ENCODE measurements at regions of chr13 and their contacts with region 1.

Region 1: DNA sequence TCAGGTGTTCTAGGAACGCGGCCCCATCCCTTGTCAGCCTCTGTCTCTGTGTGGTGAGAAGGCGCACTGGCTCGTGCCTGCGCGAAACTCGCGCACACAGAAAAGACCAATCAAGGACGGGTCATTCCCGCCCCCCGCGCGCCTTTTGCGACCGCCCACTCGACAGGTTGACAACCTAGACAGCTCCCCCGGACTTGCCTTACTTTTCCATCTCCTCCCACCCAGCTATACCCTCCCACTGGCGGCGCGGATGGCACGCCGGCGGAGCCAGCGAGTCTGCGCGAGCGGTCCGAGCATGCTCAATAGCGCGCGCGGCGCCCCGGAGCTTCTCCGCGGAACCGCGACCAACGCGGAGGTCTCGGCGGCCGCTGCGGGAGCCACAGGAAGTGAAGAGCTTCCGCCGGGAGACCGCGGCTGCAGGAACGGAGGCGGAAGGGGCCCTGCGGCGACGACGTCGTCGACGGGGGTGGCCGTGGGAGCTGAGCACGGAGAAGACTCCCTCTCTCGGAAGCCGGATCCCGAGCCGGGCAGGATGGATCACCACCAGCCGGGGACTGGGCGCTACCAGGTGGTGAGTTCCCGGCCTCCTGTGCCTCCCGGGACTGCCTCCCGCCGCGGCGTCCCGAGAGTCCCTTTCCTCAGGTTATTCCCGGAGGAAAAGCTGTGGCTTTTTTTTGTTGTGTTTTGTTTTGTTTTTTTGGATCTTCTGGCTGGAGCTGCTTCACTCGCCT is at the start of gene NDFIP2:
- DNase-seq: peak; percentile 87
- ATAC-seq: peak; percentile 85
- H3K4me3 ChIP-seq: peak within 1 kb of the TSS; percentile 98
- H3K27ac ChIP-seq: peak within 1 kb of the TSS; percentile 66
- H3K4me1 ChIP-seq: peaks cover 34% of the 10 kb centered on the region
- H3K27me3 ChIP-seq: no peaks in the 10 kb centered on the region
- CTCF ChIP-seq: no peak
- total RNA-seq, gene NDFIP2: 17.9 and 19.5 TPM in 2 replicates

Region 2: GRCh38 chr13:79423801-79424642 is 57.1 kb before region 1 on chr13:
- CTCF ChIA-PET with region 1: interaction called, 13 read pairs
- POLR2A ChIA-PET with region 1: interaction called, 15 read pairs
- intact Hi-C with region 1: no loop called
- DNase-seq: peak; percentile 58
- ATAC-seq: peak; percentile 42
- H3K4me3 ChIP-seq: no peak overlapping the region
- H3K27ac ChIP-seq: no peak overlapping the region
- H3K4me1 ChIP-seq: peaks cover 8% of the 10 kb centered on the region; the same call in 1 of the 2 replicates
- H3K27me3 ChIP-seq: no peaks in the 10 kb centered on the region
- CTCF ChIP-seq: peak; percentile 62

Region 3: DNA sequence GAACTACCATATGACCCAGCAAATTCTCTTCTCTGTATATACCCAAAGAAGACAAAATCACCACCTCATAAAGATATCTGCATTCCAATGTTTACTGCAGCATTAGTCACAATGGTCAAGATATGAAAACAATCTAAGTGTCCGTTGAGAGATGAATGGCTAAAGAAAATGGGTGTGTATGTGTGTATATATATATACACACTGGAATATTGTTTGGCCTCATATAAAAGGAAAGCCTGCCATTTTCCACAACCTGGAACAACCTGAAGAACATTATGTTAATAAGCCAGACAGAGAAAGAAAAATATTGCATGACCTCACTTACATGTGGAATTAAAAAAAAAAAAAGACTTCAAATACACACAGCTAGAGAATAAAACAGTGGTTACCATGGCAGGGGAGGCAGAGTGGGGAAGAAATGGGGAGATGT is 45.5 kb before region 1 on chr13:
- CTCF ChIA-PET with region 1: no interaction called
- POLR2A ChIA-PET with region 1: interaction called, 4 read pairs
- intact Hi-C with region 1: loop called (anchors 1 kb)
- DNase-seq: peak; percentile 74
- ATAC-seq: peak; percentile 98
- H3K4me3 ChIP-seq: no peak overlapping the region
- H3K27ac ChIP-seq: no peak overlapping the region; the same call in 1 of the 2 replicates
- H3K4me1 ChIP-seq: peaks cover 11% of the 10 kb centered on the region
- H3K27me3 ChIP-seq: no peaks in the 10 kb centered on the region
- CTCF ChIP-seq: no peak

Region 4: DNA sequence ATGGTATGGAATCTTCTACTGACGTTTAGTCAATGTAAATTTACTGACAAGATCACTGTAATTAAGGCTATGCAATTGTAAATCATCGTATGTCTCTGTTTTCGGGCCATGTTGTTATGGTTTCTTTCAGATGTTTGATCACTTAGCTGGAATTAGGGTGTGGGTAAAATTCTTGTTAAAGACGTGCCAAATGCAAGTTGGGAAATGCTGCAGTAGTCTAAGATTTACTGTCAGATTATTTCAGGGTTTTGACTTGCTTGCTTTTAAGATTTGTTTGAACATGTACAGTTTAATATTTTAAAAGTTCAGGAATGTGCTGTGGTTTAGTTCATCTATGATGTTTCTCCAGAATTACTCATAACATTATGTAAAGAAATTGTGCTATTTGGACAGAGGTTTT is 10.6 kb after region 1 on chr13:
- CTCF ChIA-PET with region 1: no interaction called
- POLR2A ChIA-PET with region 1: interaction called, 5 read pairs
- intact Hi-C with region 1: loop called (anchors 1 kb)
- DNase-seq: peak; percentile 62
- ATAC-seq: peak; percentile 89
- H3K4me3 ChIP-seq: no peak overlapping the region; the same call in 1 of the 2 replicates
- H3K27ac ChIP-seq: peak overlapping the region; percentile 40
- H3K4me1 ChIP-seq: peaks cover 23% of the 10 kb centered on the region
- H3K27me3 ChIP-seq: no peaks in the 10 kb centered on the region
- CTCF ChIP-seq: no peak

Region 5: GRCh38 chr13:79525064-79525857 is 44.1 kb after region 1 on chr13:
- CTCF ChIA-PET with region 1: no interaction called
- POLR2A ChIA-PET with region 1: no interaction called
- intact Hi-C with region 1: loop called (anchors 2 kb)
- DNase-seq: peak; percentile 69
- ATAC-seq: peak; percentile 87
- H3K4me3 ChIP-seq: no peak overlapping the region
- H3K27ac ChIP-seq: peak overlapping the region; percentile 37
- H3K4me1 ChIP-seq: peaks cover 20% of the 10 kb centered on the region
- H3K27me3 ChIP-seq: no peaks in the 10 kb centered on the region
- CTCF ChIP-seq: no peak

Region 6: GRCh38 chr13:79541426-79542049 is 60.4 kb after region 1 on chr13:
- CTCF ChIA-PET with region 1: no interaction called
- POLR2A ChIA-PET with region 1: interaction called, 7 read pairs
- intact Hi-C with region 1: loop called (anchors 1 kb)
- DNase-seq: peak; percentile 82
- ATAC-seq: peak; percentile 48; the same call in 1 of the 2 replicates
- H3K4me3 ChIP-seq: no peak overlapping the region
- H3K27ac ChIP-seq: no peak overlapping the region
- H3K4me1 ChIP-seq: no peaks in the 10 kb centered on the region
- H3K27me3 ChIP-seq: no peaks in the 10 kb centered on the region
- CTCF ChIP-seq: peak; percentile 70

Measured in PC-3 (cell line).